ENCODE measurements at regions of chr17 and their contacts with region 1.

Region 1: GRCh38 chr17:44324571-44325275 is at the start of gene SLC25A39:
- DNase-seq: peak; percentile 96
- H3K4me3 ChIP-seq: peak within 1 kb of the TSS; percentile 97
- H3K27ac ChIP-seq: peak within 1 kb of the TSS; percentile 91
- H3K4me1 ChIP-seq: peaks cover 34% of the 10 kb centered on the region
- CTCF ChIP-seq: no peak
- total RNA-seq, gene SLC25A39: 135 and 156 TPM in 2 replicates

Region 2: DNA sequence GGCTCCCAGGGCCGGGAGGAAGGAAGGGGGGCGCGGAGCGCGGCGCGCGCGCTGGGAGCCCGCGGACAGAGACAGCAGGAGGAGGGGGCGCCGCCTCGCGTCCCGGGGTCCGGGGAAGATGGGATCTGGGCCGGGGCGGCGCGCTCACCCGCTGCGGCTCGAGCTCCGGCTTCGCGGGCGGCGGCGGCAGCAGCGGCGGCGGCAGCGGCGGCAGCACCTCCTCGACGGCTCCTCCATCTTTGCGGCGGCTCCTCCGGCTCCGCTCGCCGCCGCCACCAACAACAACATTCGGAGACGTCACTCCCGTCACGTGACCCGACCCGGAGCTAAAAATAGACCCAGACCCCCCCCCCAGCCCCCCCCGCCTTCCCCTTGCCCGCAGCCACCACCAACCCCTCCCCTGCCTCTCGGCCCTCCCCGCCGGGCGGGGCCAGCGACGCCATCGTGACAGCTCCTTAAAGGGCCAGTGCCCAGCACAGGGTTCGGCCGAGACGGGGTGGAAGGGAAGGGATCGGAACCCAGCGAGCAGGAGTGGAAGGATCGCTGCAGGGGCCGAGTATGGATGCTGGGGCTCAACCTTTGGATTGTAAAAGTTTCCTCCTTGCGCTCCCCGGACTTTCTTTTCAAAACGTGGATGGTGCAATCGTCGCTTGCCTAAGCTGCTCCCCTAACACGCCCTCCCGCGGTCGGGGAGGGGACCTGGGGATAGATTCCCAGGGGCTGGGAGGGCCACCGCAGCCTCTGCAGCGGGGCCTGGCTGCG is 201.2 kb before region 1 on chr17 and contains the start of gene HDAC5:
- CTCF ChIA-PET with region 1: no interaction called
- POLR2A ChIA-PET with region 1: no interaction called
- intact Hi-C with region 1: loop called (anchors 5 kb)
- DNase-seq: peak; percentile 96
- H3K4me3 ChIP-seq: peak within 1 kb of the TSS; percentile 85
- H3K27ac ChIP-seq: peak within 1 kb of the TSS; percentile 62
- H3K4me1 ChIP-seq: peaks cover 25% of the 10 kb centered on the region
- CTCF ChIP-seq: peak; percentile 78
- total RNA-seq, gene HDAC5: 26.4 and 41.5 TPM in 2 replicates

Region 3: DNA sequence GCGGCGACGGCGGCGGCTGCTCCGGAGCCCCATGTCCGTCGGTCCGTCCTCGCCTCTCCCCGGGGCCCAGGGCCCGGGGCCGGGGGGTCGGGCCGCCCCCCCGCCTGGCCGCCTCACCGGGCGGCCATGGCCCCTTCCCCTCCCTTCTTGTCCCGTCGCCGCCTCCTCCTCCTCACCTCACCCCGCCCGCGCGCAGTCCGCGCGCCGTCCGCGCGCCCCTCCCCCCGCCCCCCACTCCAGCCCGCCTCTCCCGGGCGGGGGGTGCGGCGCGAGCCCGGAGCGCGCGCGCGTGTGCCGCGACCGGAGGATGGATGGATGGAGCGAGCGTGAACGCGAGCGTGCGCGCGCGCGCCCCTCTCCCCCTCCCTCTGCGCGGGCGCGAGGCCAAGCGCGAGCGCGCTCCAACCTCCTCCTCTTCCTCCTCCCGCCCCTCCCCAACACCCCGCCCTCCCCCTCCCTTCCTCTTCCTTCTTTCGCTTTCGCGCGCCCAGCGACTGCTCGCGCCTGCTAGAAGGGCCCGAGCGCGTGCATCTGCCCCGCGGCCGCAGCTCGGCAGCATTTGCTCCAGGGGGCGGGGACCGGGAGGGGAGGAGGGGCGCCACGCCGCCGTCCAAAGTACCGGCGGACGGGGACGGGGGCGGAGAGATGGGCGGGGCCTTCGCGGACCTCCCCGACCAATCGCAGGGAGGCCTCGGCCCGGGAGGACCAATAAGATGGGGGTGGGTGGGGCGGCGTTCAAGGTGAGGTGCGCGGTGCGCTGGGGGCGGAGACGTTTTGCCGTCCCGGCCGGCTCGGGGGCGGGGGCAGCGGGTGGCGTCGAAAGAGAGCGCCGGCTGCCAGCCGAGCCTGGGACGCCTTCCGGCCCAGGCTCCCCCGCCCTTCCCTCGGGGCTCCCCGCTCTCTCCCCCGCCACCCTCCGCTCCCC is 124.9 kb before region 1 on chr17 and contains the start of gene ATXN7L3:
- CTCF ChIA-PET with region 1: interaction called, 3 read pairs
- POLR2A ChIA-PET with region 1: interaction called, 3 read pairs
- intact Hi-C with region 1: loop called (anchors 1 kb)
- DNase-seq: peak; percentile 99
- H3K4me3 ChIP-seq: peak within 1 kb of the TSS; percentile 85
- H3K27ac ChIP-seq: peak within 1 kb of the TSS; percentile 96
- H3K4me1 ChIP-seq: peaks cover 52% of the 10 kb centered on the region
- CTCF ChIP-seq: no peak
- total RNA-seq, gene ATXN7L3: 57.7 and 66.5 TPM in 2 replicates

Region 4: GRCh38 chr17:44218344-44219107 is 106.2 kb before region 1 on chr17:
- CTCF ChIA-PET with region 1: no interaction called
- POLR2A ChIA-PET with region 1: interaction called, 4 read pairs
- intact Hi-C with region 1: loop called (anchors 2 kb)
- DNase-seq: peak; percentile 94
- H3K4me3 ChIP-seq: peak overlapping the region; percentile 90
- H3K27ac ChIP-seq: peak overlapping the region; percentile 86
- H3K4me1 ChIP-seq: peaks cover 36% of the 10 kb centered on the region
- CTCF ChIP-seq: peak; percentile 80

Measured in OCI-LY7 (cell line).